ENCODE measurements at regions of chr22 and their contacts with region 1.

Region 1: GRCh38 chr22:26865021-26865420 is 207.6 kb downstream of the MIAT start:
- DNase-seq: no peak
- H3K4me3 ChIP-seq: no peak overlapping the region
- H3K27ac ChIP-seq: no peak overlapping the region
- H3K4me1 ChIP-seq: no peaks in the 10 kb centered on the region
- H3K27me3 ChIP-seq: no peaks in the 10 kb centered on the region
- CTCF ChIP-seq: no peak

Region 2: GRCh38 chr22:25148149-25148691 is 1716.8 kb before region 1 on chr22:
- CTCF ChIA-PET with region 1: no interaction called
- POLR2A ChIA-PET with region 1: no interaction called
- intact Hi-C with region 1: no loop called
- DNase-seq: no peak
- H3K4me3 ChIP-seq: no peak overlapping the region
- H3K27ac ChIP-seq: no peak overlapping the region
- H3K4me1 ChIP-seq: no peaks in the 10 kb centered on the region
- H3K27me3 ChIP-seq: no peaks in the 10 kb centered on the region
- CTCF ChIP-seq: no peak

Region 3: DNA sequence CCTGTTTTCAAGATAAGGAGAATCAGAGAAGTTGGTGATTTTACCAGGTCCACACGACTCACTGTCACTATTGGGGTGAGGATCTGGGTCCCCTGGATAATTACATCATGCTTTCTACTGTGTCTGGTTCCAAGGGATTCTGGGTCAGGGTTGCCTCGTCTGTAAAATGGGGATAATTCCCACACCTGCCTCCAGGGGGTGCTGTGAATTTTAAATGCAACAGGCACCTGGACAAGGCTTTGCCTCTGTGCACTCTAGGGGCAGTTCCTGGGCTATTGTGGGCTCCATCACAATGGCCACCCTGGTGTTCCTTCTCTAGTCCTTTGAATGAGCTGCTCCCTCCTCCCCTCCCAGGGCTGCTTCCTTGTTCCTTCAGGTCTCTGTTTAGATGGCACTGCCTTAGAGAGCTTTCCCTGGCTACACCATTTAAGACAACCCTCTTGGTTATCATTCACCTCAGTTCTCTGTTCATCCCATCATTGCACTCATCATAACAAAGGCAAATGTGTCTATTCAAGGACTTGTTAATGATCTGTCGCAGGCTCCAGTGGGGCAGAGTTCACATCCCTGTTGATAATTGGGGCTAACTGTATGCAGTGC is 29.0 kb before region 1 on chr22:
- CTCF ChIA-PET with region 1: no interaction called
- POLR2A ChIA-PET with region 1: interaction called, 16 read pairs
- intact Hi-C with region 1: no loop called
- DNase-seq: peak; percentile 71
- H3K4me3 ChIP-seq: no peak overlapping the region
- H3K27ac ChIP-seq: no peak overlapping the region
- H3K4me1 ChIP-seq: peaks cover 3% of the 10 kb centered on the region
- H3K27me3 ChIP-seq: no peaks in the 10 kb centered on the region
- CTCF ChIP-seq: peak; percentile 83

Region 4: GRCh38 chr22:27124351-27124966 is 259.4 kb after region 1 on chr22:
- CTCF ChIA-PET with region 1: no interaction called
- POLR2A ChIA-PET with region 1: no interaction called
- intact Hi-C with region 1: no loop called
- DNase-seq: no peak
- H3K4me3 ChIP-seq: no peak overlapping the region
- H3K27ac ChIP-seq: no peak overlapping the region
- H3K4me1 ChIP-seq: peaks cover 10% of the 10 kb centered on the region
- H3K27me3 ChIP-seq: no peaks in the 10 kb centered on the region
- CTCF ChIP-seq: no peak

Measured in A673 (cell line).